Endothelial cell of umbilical vein (primary cell): ENCODE measurements at regions of chr6 and their contacts with region 1.

Region 1: GRCh38 chr6:48765352-48765961 is 654.5 kb upstream of the PTCHD4 start:
- DNase-seq: peak; percentile 74
- H3K4me3 ChIP-seq: no peak overlapping the region
- H3K27ac ChIP-seq: no peak overlapping the region
- H3K4me1 ChIP-seq: peaks cover 3% of the 10 kb centered on the region
- H3K27me3 ChIP-seq: no peaks in the 10 kb centered on the region
- CTCF ChIP-seq: peak; percentile 49 to 50
- POLR2A ChIP-seq: no peak

Region 2: GRCh38 chr6:48318670-48319069 is 446.8 kb before region 1 on chr6:
- CTCF ChIA-PET with region 1: no interaction called
- POLR2A ChIA-PET with region 1: no interaction called
- dilution Hi-C with region 1: no loop called
- intact Hi-C with region 1: loop called (anchors 10 kb)
- DNase-seq: peak; percentile 47
- H3K4me3 ChIP-seq: no peak overlapping the region
- H3K27ac ChIP-seq: no peak overlapping the region
- H3K4me1 ChIP-seq: no peaks in the 10 kb centered on the region
- H3K27me3 ChIP-seq: no peaks in the 10 kb centered on the region
- CTCF ChIP-seq: no peak
- POLR2A ChIP-seq: no peak

Region 3: DNA sequence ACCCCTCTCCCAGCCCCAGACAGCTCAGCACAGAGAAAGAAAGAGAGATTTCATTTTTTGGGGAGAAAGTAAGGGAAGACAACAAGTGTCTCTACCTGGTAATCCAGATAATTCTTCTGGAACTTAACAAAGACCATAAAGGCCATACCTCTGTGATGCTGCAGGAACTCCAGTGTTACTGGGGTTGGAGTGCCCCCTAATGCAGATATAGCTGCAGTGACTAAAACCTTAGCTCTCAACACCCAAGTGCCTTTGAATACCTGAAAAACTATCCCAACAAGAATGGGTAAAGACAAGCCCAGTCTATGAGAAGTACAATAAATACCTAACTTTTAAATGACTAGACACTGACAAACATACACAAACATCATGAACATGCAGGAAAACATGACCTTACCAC is 289.2 kb before region 1 on chr6:
- CTCF ChIA-PET with region 1: interaction called, 11 read pairs
- POLR2A ChIA-PET with region 1: no interaction called
- dilution Hi-C with region 1: no loop called
- intact Hi-C with region 1: no loop called
- DNase-seq: peak; percentile 45
- H3K4me3 ChIP-seq: no peak overlapping the region
- H3K27ac ChIP-seq: no peak overlapping the region
- H3K4me1 ChIP-seq: no peaks in the 10 kb centered on the region
- H3K27me3 ChIP-seq: no peaks in the 10 kb centered on the region
- CTCF ChIP-seq: peak; percentile 6 to 37
- POLR2A ChIP-seq: no peak

Region 4: GRCh38 chr6:48691420-48691819 is 74.0 kb before region 1 on chr6:
- CTCF ChIA-PET with region 1: no interaction called
- POLR2A ChIA-PET with region 1: no interaction called
- dilution Hi-C with region 1: no loop called
- intact Hi-C with region 1: no loop called
- DNase-seq: no peak
- H3K4me3 ChIP-seq: no peak overlapping the region
- H3K27ac ChIP-seq: no peak overlapping the region
- H3K4me1 ChIP-seq: no peaks in the 10 kb centered on the region
- H3K27me3 ChIP-seq: no peaks in the 10 kb centered on the region
- CTCF ChIP-seq: no peak
- POLR2A ChIP-seq: no peak

Region 5: GRCh38 chr6:48743738-48744137 is 21.7 kb before region 1 on chr6:
- CTCF ChIA-PET with region 1: no interaction called
- POLR2A ChIA-PET with region 1: no interaction called
- dilution Hi-C with region 1: no loop called
- intact Hi-C with region 1: no loop called
- DNase-seq: no peak
- H3K4me3 ChIP-seq: no peak overlapping the region
- H3K27ac ChIP-seq: no peak overlapping the region
- H3K4me1 ChIP-seq: no peaks in the 10 kb centered on the region
- H3K27me3 ChIP-seq: no peaks in the 10 kb centered on the region
- CTCF ChIP-seq: no peak
- POLR2A ChIP-seq: no peak